Dorsolateral prefrontal cortex (tissue), 120 donors: ENCODE measurements at regions of chr14 and their contacts with region 1.

Region 1: GRCh38 chr14:79278798-79279644 is 932.3 kb downstream of the DIO2 start:
- DNase-seq: peak; percentile 28 to 95 (median 69)
- H3K4me3 ChIP-seq: peak overlapping the region; percentile 39 to 89 (median 69)
- H3K27ac ChIP-seq: peak overlapping the region in 5 of 59 donors; percentile 13 to 86 (median 56)
- H3K27me3 ChIP-seq: peaks cover 0 to 11% (median 0%) of the 10 kb centered on the region in 45 donors
- CTCF ChIP-seq: peak in 1 of 56 donors; percentile 16

Region 2: GRCh38 chr14:79324788-79325467 is 45.9 kb after region 1 on chr14:
- intact Hi-C with region 1: loop called in 1 of 2 experiments (anchors 10 kb)
- DNase-seq: no peak
- H3K4me3 ChIP-seq: no peak overlapping the region
- H3K27ac ChIP-seq: no peak overlapping the region
- H3K27me3 ChIP-seq: no peaks in the 10 kb centered on the region
- CTCF ChIP-seq: no peak

Region 3: DNA sequence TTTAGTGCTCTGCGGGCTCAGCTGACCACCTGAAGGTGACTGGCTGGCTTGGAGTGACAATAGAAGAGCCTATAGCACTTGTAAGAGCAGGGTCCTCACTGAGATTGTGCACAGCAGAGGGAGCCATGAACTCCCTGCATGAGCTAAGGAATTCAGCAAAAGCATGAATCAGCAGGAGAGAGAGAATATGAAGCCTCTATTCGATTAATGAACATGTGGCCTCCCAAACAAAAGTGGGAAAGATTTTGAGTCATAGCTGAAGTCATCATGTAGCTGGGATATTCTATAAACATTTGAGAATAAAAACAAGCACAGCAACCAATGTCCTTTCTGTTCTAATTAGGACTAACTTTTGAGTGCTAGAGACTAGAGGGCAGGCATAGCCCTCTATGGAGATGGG is 305.7 kb after region 1 on chr14:
- intact Hi-C with region 1: no loop called
- DNase-seq: no peak
- H3K4me3 ChIP-seq: no peak overlapping the region
- H3K27ac ChIP-seq: peak overlapping the region in 1 of 59 donors; percentile 38
- H3K27me3 ChIP-seq: no peaks in the 10 kb centered on the region
- CTCF ChIP-seq: peak in 5 of 56 donors; percentile 9 to 22 (median 12)